ENCODE measurements at regions of chr17 and their contacts with region 1.

Region 1: GRCh38 chr17:18184143-18185031 is 759 bp downstream of the ALKBH5 start:
- DNase-seq: no peak
- H3K4me3 ChIP-seq: peak overlapping the region; percentile 71
- CTCF ChIP-seq: no peak

Region 2: DNA sequence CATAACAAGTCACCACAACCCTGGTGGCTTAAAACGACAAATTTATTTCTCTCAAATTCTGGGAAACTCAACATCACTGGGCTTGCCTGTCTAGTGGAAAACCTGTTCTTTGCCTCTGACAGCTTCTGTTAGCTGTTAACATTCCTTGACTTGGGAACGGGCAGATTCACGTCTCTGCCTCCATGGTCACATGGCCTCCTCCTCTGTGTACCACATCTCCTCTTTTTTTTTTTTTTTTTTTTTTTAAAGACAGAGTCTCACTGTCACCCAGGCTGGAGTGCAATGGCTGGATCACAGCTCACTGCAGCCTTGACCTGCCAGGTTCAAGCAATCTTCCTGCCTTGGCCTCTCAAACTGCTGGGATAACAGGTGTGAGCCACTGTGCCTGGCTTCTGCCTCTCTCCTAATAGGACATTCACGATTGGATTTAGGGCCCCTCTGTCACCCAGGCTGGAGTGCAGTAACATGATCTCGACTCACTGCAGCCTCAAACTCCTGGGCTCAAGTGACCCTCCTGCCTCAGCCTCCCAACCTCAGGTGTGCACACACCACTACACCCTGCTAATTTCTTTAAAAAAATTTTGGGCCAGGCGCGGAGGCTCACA is 29.4 kb after region 1 on chr17:
- in situ Hi-C with region 1: no loop called
- DNase-seq: no peak
- H3K4me3 ChIP-seq: no peak overlapping the region
- CTCF ChIP-seq: no peak

Region 3: DNA sequence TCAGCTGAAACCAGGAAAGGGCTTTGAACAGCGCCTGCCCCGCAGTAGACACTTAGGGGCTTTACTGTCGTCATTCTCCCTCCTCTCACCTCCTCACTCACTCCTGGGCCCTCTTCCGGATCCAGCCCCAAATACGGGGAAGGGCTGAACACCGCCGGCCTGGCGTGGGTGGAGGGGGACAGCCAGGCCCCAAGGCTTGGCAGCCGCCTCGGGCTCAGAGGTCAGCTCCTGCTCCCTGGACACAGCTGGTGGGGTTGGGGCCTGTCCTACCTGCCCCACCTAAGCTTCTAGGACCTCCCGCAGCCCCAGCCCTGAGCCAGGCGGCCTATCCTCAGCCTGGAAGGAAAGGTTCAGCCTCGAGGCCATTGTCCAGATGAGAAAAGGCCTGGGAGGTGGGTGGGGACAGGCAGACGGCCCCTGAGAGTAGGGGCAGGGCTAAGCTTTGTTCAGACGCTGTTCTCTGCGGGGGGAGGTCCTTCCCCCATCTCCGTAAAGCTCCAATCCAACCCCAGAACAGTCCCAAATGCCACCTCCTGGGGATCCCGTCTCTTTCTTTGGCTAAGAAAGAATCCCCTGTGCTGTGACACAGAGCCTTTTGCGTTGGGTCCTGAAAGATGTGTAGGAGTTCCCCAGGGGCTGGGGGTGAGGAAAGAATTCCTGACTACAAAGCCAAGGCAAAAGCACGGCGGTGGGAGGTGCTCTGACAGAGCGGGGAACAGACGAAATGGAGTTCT is 40.2 kb after region 1 on chr17:
- in situ Hi-C with region 1: loop called (anchors 5 kb)
- DNase-seq: no peak
- H3K4me3 ChIP-seq: peak overlapping the region; percentile 31
- CTCF ChIP-seq: no peak

Region 4: GRCh38 chr17:18235743-18236256 is 51.4 kb after region 1 on chr17:
- in situ Hi-C with region 1: no loop called
- DNase-seq: no peak
- H3K4me3 ChIP-seq: no peak overlapping the region
- CTCF ChIP-seq: no peak

Region 5: GRCh38 chr17:18248300-18248731 is 63.9 kb after region 1 on chr17:
- in situ Hi-C with region 1: no loop called
- DNase-seq: peak; percentile 53
- H3K4me3 ChIP-seq: no peak overlapping the region
- CTCF ChIP-seq: peak; percentile 82

Region 6: GRCh38 chr17:18280766-18281371 is 96.5 kb after region 1 on chr17:
- in situ Hi-C with region 1: no loop called
- DNase-seq: no peak
- H3K4me3 ChIP-seq: no peak overlapping the region
- CTCF ChIP-seq: no peak